ENCODE measurements at regions of chr6 and their contacts with region 1.

Region 1: DNA sequence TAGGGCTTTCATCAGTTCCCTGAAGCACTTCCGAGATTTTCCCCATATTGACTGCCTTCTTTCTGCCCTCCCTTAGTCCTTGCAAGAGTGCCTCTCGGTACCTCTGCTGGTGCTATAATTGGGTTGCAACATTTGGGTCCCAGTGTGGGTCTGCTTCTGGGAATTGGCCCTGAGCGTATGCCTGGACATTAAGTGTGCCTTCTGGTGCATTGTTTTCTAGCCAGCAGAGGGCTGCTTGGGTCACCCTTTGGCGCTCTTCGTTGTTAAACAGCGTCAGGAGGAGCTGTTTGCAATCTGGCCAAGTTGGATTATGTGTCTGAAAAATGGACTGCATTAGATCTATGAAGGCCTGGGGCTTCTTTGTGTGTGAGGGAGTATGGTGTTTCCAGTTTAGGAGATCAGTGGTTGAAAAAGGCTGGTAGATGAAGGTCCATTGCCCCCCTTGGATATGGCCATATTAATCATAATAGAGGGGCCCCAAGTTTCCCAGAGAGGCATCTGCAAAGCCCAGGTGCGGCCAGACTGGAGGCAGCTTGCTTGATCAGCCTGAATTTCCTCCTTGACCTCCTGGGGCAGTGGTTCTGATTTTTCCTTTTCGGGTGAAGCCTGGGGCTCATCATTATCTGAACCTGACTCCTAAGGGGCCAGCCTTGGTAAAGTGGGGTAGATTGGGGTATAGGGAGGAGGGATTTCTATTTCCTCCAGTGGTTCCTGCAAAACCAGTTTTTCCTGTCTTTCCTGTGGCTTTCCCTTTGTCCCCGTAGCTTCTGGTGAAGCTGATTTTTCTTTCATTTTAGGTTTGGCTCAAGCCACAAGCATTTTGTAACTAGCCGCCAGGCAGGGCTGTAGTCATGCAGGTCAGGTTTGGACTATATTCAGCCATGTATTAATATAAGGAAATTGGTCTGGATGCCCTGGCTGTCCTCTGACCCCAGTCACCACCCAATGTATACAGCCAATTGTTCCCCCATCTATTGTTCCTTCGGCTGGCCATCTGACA is 85.4 kb upstream of the GPR6 start:
- DNase-seq: peak; percentile 86
- H3K4me3 Mint-ChIP-seq: peak overlapping the region; percentile 46
- H3K27ac Mint-ChIP-seq: peak overlapping the region; percentile 97
- H3K4me1 Mint-ChIP-seq: peaks cover 44% of the 10 kb centered on the region
- H3K27me3 Mint-ChIP-seq: no peaks in the 10 kb centered on the region
- CTCF ChIP-seq: peak; percentile 20

Region 2: DNA sequence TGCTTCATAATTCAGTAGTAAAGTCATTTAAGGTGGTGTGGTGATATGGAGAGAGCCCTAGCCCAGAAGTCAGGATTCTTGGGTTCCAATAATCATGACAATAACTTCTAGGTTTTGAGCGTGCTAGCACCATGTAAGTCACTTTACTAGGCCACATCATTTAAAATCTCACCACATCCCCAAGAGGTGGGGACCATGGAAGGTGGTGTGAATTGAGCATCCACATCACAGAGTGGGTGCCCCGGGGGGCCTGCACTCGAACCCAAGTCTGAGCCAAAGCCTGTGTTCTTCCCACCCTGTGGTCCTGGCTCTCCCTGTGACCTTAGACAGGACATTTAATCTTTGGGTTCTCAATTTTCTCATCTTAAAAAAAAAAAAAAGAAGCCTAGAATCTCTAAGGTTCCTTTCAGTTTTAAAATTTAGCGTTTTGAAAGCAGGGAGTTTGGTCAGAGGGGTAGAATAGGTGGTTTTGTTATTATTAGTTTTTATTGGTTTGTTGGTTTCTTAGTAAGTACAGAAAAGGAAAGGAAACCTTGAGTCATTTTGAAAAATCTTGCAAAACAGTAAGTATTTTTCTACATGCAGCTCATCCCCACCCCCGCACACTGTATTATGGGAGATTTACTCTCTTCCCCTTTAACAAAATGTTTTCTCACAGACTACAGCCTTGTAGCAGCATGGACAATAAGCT is 1018.1 kb before region 1 on chr6:
- CTCF ChIA-PET with region 1: no interaction called
- intact Hi-C with region 1: no loop called
- DNase-seq: no peak
- H3K4me3 Mint-ChIP-seq: no peak overlapping the region
- H3K27ac Mint-ChIP-seq: no peak overlapping the region
- H3K4me1 Mint-ChIP-seq: no peaks in the 10 kb centered on the region
- H3K27me3 Mint-ChIP-seq: no peaks in the 10 kb centered on the region
- CTCF ChIP-seq: no peak

Region 3: GRCh38 chr6:109944448-109944847 is 51.7 kb after region 1 on chr6:
- CTCF ChIA-PET with region 1: interaction called, 3 read pairs
- intact Hi-C with region 1: loop called (anchors 5 kb)
- DNase-seq: peak; percentile 74
- H3K4me3 Mint-ChIP-seq: no peak overlapping the region
- H3K27ac Mint-ChIP-seq: peak overlapping the region; percentile 40
- H3K4me1 Mint-ChIP-seq: peaks cover 50% of the 10 kb centered on the region
- H3K27me3 Mint-ChIP-seq: no peaks in the 10 kb centered on the region
- CTCF ChIP-seq: no peak

Region 4: GRCh38 chr6:109961666-109962065 is 68.9 kb after region 1 on chr6:
- CTCF ChIA-PET with region 1: interaction called, 9 read pairs
- intact Hi-C with region 1: loop called (anchors 2 kb)
- DNase-seq: peak; percentile 39
- H3K4me3 Mint-ChIP-seq: peak overlapping the region; percentile 28
- H3K27ac Mint-ChIP-seq: peak overlapping the region; percentile 16
- H3K4me1 Mint-ChIP-seq: peaks cover 25% of the 10 kb centered on the region
- H3K27me3 Mint-ChIP-seq: no peaks in the 10 kb centered on the region
- CTCF ChIP-seq: no peak

Region 5: GRCh38 chr6:109991201-109992101 is 98.7 kb after region 1 on chr6:
- CTCF ChIA-PET with region 1: no interaction called
- intact Hi-C with region 1: no loop called
- DNase-seq: no peak
- H3K4me3 Mint-ChIP-seq: no peak overlapping the region
- H3K27ac Mint-ChIP-seq: no peak overlapping the region
- H3K4me1 Mint-ChIP-seq: no peaks in the 10 kb centered on the region
- H3K27me3 Mint-ChIP-seq: peaks cover 28% of the 10 kb centered on the region
- CTCF ChIP-seq: no peak

Region 6: DNA sequence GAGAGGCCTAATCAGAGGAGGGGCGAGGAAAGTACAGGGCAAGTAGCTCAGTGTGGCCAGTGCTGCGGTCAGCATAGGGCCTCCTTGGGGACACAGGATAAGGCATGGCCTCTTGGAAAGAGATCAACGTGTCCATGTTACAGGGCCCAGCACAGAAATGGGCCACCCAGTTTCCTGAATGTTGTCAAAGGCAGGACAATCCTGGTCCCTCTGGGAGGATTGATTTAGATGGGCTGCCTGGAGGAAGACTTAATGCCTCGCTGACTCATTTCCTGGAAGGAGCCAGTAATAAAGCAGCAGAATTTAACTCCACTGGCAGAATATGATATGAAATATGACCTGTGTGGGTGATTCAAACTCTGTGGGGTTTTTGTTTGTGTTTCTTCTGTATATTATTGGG is 506.0 kb after region 1 on chr6:
- CTCF ChIA-PET with region 1: no interaction called
- intact Hi-C with region 1: loop called (anchors 10 kb)
- DNase-seq: no peak
- H3K4me3 Mint-ChIP-seq: no peak overlapping the region
- H3K27ac Mint-ChIP-seq: no peak overlapping the region
- H3K4me1 Mint-ChIP-seq: no peaks in the 10 kb centered on the region
- H3K27me3 Mint-ChIP-seq: no peaks in the 10 kb centered on the region
- CTCF ChIP-seq: no peak

Measured in Calu3 (cell line).